IMR-90 (cell line): ENCODE measurements at regions of chr12 and their contacts with region 1.

Region 1: DNA sequence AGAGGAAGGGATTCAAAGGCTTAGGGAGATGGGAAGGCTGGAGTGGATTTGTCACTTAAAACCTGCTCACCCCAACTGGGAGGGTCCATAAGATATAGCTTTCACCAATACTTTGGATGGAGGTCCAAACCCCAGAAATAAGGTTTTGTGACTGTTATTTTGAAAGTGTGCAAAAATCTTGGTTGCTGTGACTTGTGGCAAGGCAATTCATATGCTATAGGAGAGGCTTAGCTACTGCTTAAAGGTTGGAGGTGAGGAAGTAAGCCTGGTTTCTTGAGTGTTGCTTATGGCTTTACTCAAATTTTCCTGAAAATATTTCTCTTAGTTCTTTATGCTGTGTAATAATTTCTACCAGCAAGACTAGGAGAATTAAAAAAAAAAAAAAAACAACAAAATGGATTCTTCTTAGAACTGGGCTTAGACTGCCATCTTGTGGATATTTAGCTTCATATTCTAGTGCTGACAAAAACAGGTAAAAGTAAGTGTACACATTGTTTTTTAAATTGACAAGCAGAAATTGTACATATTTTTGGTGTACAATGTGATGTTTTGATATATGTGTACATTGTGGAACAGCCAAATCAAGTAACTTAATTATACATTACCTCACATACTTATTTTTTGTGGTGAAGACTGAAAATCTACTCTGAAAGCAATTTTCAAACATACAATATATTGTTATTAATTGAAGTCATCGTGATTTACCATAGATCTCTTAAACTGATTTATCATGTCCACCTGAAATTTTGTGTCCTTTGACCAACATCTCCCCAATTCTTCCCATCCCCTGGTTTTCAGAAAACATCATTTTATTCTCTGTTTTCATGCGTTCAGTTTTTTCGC is 23.0 kb downstream of the PDE6H start:
- DNase-seq: peak; percentile 79
- ATAC-seq: no peak
- H3K4me3 ChIP-seq: no peak overlapping the region
- H3K27ac ChIP-seq: no peak overlapping the region
- H3K4me1 ChIP-seq: peaks cover 10% of the 10 kb centered on the region
- H3K27me3 ChIP-seq: no peaks in the 10 kb centered on the region
- CTCF ChIP-seq: peak; percentile 79
- POLR2A ChIP-seq: no peak
- RAD21 ChIP-seq: peak; percentile 83

Region 2: DNA sequence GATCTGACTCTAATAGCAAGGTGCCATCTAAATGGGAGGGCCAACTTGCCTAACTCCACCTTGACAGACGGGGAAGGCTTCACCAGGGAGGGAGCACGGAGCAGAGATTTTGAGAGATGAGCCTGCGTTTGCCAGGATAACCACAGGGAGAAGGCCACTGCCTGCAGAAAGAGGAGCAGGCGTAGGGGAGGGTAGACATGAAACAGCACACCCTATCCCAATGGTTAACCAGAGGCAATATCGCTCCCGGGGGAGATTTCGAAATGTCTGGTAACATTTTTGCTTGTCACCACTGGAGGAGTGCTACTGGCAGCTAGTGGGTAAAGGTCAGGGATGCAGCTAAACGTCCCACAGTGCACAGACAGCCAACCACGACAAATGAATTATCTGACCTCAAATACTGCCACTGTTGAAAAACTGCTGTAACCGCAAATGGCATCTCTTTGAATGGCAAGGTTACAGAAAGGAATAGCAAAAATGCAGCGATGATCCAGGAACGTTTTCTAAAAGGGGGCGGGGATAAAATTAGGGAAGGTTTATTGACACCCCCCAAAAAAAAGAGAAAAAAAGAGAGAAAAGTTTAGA is 756.4 kb before region 1 on chr12:
- CTCF ChIA-PET with region 1: no interaction called
- POLR2A ChIA-PET with region 1: no interaction called
- dilution Hi-C with region 1: no loop called
- in situ Hi-C with region 1: loop called (anchors 25 kb)
- intact Hi-C with region 1: loop called (anchors 1 kb)
- DNase-seq: no peak
- ATAC-seq: peak; percentile 54
- H3K4me3 ChIP-seq: no peak overlapping the region
- H3K27ac ChIP-seq: no peak overlapping the region
- H3K4me1 ChIP-seq: peaks cover 4% of the 10 kb centered on the region; the same call in 1 of the 2 replicates
- H3K27me3 ChIP-seq: no peaks in the 10 kb centered on the region
- CTCF ChIP-seq: no peak
- POLR2A ChIP-seq: no peak
- RAD21 ChIP-seq: no peak

Region 3: GRCh38 chr12:14723763-14724162 is 272.0 kb before region 1 on chr12:
- CTCF ChIA-PET with region 1: no interaction called
- POLR2A ChIA-PET with region 1: no interaction called
- dilution Hi-C with region 1: no loop called
- in situ Hi-C with region 1: no loop called
- intact Hi-C with region 1: loop called (anchors 1 kb)
- DNase-seq: peak; percentile 58
- ATAC-seq: peak; percentile 80
- H3K4me3 ChIP-seq: no peak overlapping the region
- H3K27ac ChIP-seq: no peak overlapping the region
- H3K4me1 ChIP-seq: no peaks in the 10 kb centered on the region
- H3K27me3 ChIP-seq: no peaks in the 10 kb centered on the region
- CTCF ChIP-seq: peak; percentile 74
- POLR2A ChIP-seq: no peak
- RAD21 ChIP-seq: peak; percentile 78

Region 4: DNA sequence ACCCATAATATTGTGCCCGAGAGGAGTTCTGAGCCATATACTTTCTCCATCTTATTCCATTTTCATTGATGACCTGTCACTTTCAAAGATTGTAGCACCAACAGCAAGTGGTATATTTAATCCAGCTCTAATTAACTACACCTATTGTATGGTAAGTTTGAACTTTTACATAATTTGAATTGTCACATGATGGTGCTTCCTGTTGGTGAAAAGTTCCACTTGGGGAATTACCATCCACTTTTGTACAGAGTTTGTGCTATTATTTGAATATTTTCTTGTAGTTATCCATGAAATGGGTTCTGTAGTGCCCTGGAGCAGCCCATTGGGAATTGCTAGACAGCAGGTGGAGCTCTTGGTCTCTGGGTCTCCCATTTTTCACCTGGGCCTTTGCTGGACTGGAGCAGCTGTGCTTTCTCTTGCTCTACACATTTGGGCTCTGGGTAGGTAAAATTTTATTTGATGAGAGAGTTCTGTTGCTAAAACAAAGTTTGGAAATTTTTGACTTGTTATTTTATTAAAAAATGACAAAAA is 184.8 kb before region 1 on chr12:
- CTCF ChIA-PET with region 1: no interaction called
- POLR2A ChIA-PET with region 1: no interaction called
- dilution Hi-C with region 1: no loop called
- in situ Hi-C with region 1: no loop called
- intact Hi-C with region 1: loop called (anchors 1 kb)
- DNase-seq: peak; percentile 33
- ATAC-seq: 0 out of 2 replicates have a peak, but pooled peaks have one; percentile 51
- H3K4me3 ChIP-seq: no peak overlapping the region
- H3K27ac ChIP-seq: no peak overlapping the region
- H3K4me1 ChIP-seq: no peaks in the 10 kb centered on the region
- H3K27me3 ChIP-seq: peaks cover 2% of the 10 kb centered on the region; the same call in 1 of the 2 replicates
- CTCF ChIP-seq: peak; percentile 58
- POLR2A ChIP-seq: no peak
- RAD21 ChIP-seq: peak; percentile 63

Region 5: GRCh38 chr12:14930299-14930698 is 65.5 kb before region 1 on chr12:
- CTCF ChIA-PET with region 1: no interaction called
- POLR2A ChIA-PET with region 1: no interaction called
- dilution Hi-C with region 1: no loop called
- in situ Hi-C with region 1: no loop called
- intact Hi-C with region 1: loop called (anchors 2 kb)
- DNase-seq: peak; percentile 27
- ATAC-seq: peak; percentile 60
- H3K4me3 ChIP-seq: no peak overlapping the region
- H3K27ac ChIP-seq: no peak overlapping the region
- H3K4me1 ChIP-seq: peaks cover 4% of the 10 kb centered on the region
- H3K27me3 ChIP-seq: no peaks in the 10 kb centered on the region
- CTCF ChIP-seq: peak; percentile 35
- POLR2A ChIP-seq: no peak
- RAD21 ChIP-seq: peak; percentile 31

Region 6: DNA sequence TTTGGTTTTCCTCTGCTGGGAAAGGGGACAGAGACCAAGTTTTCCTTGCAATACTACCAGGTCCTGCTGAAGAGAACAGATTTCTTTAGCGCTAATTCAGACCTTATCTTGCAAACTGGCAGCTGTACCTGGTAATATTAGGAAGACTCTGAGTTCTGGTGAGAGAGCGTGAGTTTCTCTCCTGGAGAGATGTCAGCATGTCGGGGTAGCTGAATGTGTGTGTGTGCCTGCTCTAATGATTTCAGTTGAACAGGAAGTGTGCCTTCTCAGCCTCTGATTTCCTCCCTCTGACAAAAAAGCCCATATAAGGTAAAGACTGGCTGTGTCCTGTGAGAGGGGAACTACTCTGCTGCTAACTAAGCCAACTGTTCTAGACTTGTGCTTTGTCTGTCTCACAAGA is 47.1 kb before region 1 on chr12:
- CTCF ChIA-PET with region 1: no interaction called
- POLR2A ChIA-PET with region 1: no interaction called
- dilution Hi-C with region 1: no loop called
- in situ Hi-C with region 1: no loop called
- intact Hi-C with region 1: no loop called
- DNase-seq: peak; percentile 89
- ATAC-seq: peak; percentile 79
- H3K4me3 ChIP-seq: no peak overlapping the region
- H3K27ac ChIP-seq: peak overlapping the region; percentile 92
- H3K4me1 ChIP-seq: peaks cover 25% of the 10 kb centered on the region
- H3K27me3 ChIP-seq: no peaks in the 10 kb centered on the region
- CTCF ChIP-seq: no peak
- POLR2A ChIP-seq: peak; percentile 55; the same call in 1 of the 2 replicates
- RAD21 ChIP-seq: no peak